Vagina (tissue), 2 donors: ENCODE measurements at regions of chr2 and their contacts with region 1.

Region 1: GRCh38 chr2:19863303-19864041 is 38.3 kb downstream of the TTC32 start:
- DNase-seq: no peak
- H3K4me3 ChIP-seq: no peak overlapping the region
- H3K27ac ChIP-seq: no peak overlapping the region
- H3K4me1 ChIP-seq: peaks cover 13% of the 10 kb centered on the region
- H3K27me3 ChIP-seq: no peaks in the 10 kb centered on the region
- CTCF ChIP-seq: peak; percentile 78 to 97 (median 92)
- POLR2A ChIP-seq: no peak

Region 2: GRCh38 chr2:18520451-18521425 is 1342.7 kb before region 1 on chr2:
- intact Hi-C with region 1: loop called (anchors 5 kb)
- DNase-seq: peak in 1 of 2 donors; percentile 94
- H3K4me3 ChIP-seq: no peak overlapping the region
- H3K27ac ChIP-seq: peak overlapping the region; percentile 67
- H3K4me1 ChIP-seq: peaks cover 25% of the 10 kb centered on the region
- H3K27me3 ChIP-seq: no peaks in the 10 kb centered on the region
- CTCF ChIP-seq: peak; percentile 71 to 83 (median 78)
- POLR2A ChIP-seq: no peak

Region 3: GRCh38 chr2:18749912-18750526 is 1113.5 kb before region 1 on chr2:
- intact Hi-C with region 1: loop called (anchors 10 kb)
- DNase-seq: no peak
- H3K4me3 ChIP-seq: no peak overlapping the region
- H3K27ac ChIP-seq: no peak overlapping the region
- H3K4me1 ChIP-seq: no peaks in the 10 kb centered on the region
- H3K27me3 ChIP-seq: no peaks in the 10 kb centered on the region
- CTCF ChIP-seq: peak; percentile 47 to 74 (median 49)
- POLR2A ChIP-seq: no peak

Region 4: DNA sequence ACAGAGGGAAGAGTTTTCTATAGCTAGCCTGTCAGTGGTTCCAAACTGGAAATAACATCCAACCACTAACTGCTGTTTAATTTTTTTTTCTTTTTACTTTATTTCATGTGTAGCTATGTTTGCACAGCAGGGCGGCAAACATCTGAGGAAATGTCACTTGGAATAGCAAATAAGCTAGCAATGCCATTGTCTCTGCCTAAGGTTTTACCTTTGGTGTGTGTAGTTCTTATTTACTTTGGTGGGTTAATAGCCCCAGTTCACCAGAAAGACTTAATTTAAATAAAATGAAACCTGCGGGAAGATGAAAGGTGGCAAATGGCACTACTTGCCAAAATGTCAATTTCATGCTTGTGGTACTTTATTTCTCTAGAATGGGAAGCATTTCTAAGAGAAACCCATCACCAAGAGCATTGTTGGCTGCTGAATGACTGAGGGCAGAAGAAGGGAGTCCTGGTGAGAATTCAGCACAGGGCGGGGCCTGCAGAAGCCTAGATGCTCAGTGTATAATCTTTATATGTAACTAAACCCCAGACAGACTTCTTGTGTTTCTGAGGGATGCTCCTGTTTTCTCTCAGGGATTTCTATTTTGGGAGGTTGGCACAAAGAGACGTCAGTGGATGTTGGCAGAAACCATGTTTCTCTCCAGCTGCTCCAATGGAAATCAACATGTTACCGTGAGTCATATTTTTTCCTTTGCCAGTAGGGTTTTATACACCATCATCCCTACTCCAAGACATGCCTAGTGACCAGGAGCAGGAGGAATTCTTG is 973.7 kb before region 1 on chr2:
- intact Hi-C with region 1: loop called (anchors 10 kb)
- DNase-seq: no peak
- H3K4me3 ChIP-seq: no peak overlapping the region
- H3K27ac ChIP-seq: peak overlapping the region; percentile 40
- H3K4me1 ChIP-seq: no peaks in the 10 kb centered on the region
- H3K27me3 ChIP-seq: no peaks in the 10 kb centered on the region
- CTCF ChIP-seq: no peak
- POLR2A ChIP-seq: no peak